IMR-90 (cell line): ENCODE measurements at regions of chr5 and their contacts with region 1.

Region 1: DNA sequence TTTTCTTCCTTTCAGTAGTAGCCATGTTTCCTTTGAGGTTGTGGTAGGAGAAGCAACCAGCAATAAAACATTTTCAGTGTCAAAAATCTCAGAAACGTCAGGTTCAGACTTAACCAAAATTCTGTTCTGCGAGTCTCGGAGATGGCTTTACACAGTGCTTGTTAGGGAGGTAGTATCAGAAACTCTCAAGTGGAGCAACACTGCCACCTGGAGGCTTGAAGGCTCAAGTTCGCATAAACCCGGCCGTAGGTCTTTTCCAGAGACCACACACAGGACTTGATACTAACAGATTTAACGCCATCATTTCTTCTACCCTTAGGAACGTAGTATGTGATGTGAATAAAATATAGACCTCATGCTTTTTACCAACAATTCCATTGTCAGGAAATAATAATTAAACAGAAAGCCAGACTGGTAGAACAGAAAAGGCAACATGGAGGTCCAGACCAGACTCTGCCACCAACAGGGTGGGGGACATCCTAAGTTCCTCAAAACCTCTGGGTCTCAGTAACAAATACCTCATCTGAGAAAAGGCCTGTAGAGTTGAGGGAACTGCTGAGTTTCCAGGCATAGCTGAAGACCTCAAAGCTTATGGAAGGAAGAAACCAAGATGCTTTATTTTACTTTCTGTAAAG is 8.5 kb downstream of the PTGER4 start:
- DNase-seq: peak; percentile 89
- ATAC-seq: peak; percentile 86
- H3K4me3 ChIP-seq: no peak overlapping the region
- H3K27ac ChIP-seq: peak overlapping the region; percentile 26; the same call in 1 of the 2 replicates
- H3K4me1 ChIP-seq: peaks cover 5% of the 10 kb centered on the region
- H3K27me3 ChIP-seq: no peaks in the 10 kb centered on the region
- CTCF ChIP-seq: peak; percentile 91
- POLR2A ChIP-seq: no peak; the same call in 1 of the 2 replicates
- RAD21 ChIP-seq: peak; percentile 98

Region 2: DNA sequence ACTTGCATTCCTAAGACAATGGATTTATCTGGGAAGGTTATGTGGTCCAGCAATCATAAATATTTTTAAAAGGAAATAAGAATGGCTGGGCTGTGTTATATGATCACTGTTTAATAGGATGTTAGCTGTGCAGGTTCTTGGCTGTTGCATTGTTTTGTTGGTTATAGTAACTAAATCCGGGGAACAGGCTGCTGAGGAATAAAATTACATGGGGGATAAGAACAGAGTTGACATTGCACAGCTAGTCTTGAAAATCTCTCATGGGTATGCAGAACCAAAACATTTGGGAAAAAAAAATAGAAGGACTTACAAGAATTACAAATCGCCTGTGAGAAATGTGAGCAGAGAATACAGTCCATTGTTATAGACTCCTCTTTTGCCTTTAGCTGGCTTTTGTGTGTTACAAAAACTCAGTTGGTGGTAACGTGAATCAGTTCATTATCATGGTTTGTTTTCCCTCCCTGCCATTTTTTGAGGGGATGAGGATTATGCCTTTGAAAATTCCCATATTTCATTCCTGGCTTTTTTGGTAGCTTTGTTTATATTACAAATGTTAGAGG is 888.1 kb before region 1 on chr5:
- CTCF ChIA-PET with region 1: no interaction called
- POLR2A ChIA-PET with region 1: no interaction called
- dilution Hi-C with region 1: no loop called
- in situ Hi-C with region 1: no loop called
- intact Hi-C with region 1: loop called (anchors 10 kb)
- DNase-seq: no peak
- ATAC-seq: no peak
- H3K4me3 ChIP-seq: no peak overlapping the region
- H3K27ac ChIP-seq: no peak overlapping the region
- H3K4me1 ChIP-seq: peaks cover 2% of the 10 kb centered on the region; the same call in 1 of the 2 replicates
- H3K27me3 ChIP-seq: no peaks in the 10 kb centered on the region
- CTCF ChIP-seq: no peak
- POLR2A ChIP-seq: no peak
- RAD21 ChIP-seq: no peak

Region 3: DNA sequence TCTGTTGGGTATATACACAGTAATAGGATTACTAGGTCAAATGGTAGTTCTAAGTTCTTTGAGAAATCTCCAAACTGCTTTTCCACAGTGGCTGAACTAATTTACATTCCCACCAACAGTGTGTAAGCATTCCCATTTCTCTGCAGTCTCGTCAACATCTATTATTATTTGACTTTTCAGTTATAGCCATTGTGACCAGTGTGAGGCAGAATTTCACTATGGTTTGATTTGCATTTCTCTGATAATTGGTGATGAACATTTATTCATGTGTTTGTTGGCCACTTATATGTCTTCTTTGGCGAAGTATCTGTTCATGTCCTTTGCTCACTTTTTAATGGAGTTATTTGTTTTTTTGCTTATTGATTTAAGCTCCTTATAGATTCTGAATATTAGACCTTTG is 667.2 kb before region 1 on chr5:
- CTCF ChIA-PET with region 1: no interaction called
- POLR2A ChIA-PET with region 1: no interaction called
- dilution Hi-C with region 1: no loop called
- in situ Hi-C with region 1: no loop called
- intact Hi-C with region 1: loop called (anchors 5 kb)
- DNase-seq: peak; percentile 2
- ATAC-seq: no peak
- H3K4me3 ChIP-seq: no peak overlapping the region
- H3K27ac ChIP-seq: no peak overlapping the region
- H3K4me1 ChIP-seq: no peaks in the 10 kb centered on the region
- H3K27me3 ChIP-seq: peaks cover 3% of the 10 kb centered on the region; the same call in 1 of the 2 replicates
- CTCF ChIP-seq: 0 out of 2 replicates have a peak, but pooled peaks have one; percentile 23
- POLR2A ChIP-seq: no peak
- RAD21 ChIP-seq: peak; percentile 37

Region 4: GRCh38 chr5:40367255-40367654 is 321.0 kb before region 1 on chr5:
- CTCF ChIA-PET with region 1: no interaction called
- POLR2A ChIA-PET with region 1: no interaction called
- dilution Hi-C with region 1: no loop called
- in situ Hi-C with region 1: no loop called
- intact Hi-C with region 1: loop called (anchors 2 kb)
- DNase-seq: peak; percentile 13
- ATAC-seq: no peak
- H3K4me3 ChIP-seq: no peak overlapping the region
- H3K27ac ChIP-seq: no peak overlapping the region
- H3K4me1 ChIP-seq: no peaks in the 10 kb centered on the region
- H3K27me3 ChIP-seq: no peaks in the 10 kb centered on the region
- CTCF ChIP-seq: peak; percentile 27
- POLR2A ChIP-seq: no peak
- RAD21 ChIP-seq: peak; percentile 43

Region 5: DNA sequence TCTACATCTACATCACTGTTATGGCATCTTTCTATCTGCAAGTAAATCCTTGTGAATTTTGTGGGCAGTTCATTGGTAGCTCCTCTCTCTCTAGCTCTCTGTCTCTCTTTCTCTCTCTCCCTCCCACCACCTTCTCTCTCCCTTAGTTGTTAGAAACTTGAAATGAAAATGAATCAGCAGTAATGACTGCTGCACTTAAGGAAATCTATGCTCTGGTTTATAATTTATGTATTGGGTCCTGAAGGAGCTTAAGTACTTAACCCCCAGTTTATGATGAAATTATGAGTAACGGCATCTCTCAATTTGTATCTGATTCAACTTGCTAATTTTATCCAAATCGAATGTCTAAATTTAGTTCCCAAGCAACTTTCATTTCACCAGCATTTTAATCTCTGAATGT is 60.5 kb before region 1 on chr5:
- CTCF ChIA-PET with region 1: no interaction called
- POLR2A ChIA-PET with region 1: no interaction called
- dilution Hi-C with region 1: no loop called
- in situ Hi-C with region 1: no loop called
- intact Hi-C with region 1: no loop called
- DNase-seq: peak; percentile 35
- ATAC-seq: peak; percentile 37
- H3K4me3 ChIP-seq: no peak overlapping the region
- H3K27ac ChIP-seq: no peak overlapping the region
- H3K4me1 ChIP-seq: peaks cover 4% of the 10 kb centered on the region; the same call in 1 of the 2 replicates
- H3K27me3 ChIP-seq: no peaks in the 10 kb centered on the region
- CTCF ChIP-seq: no peak
- POLR2A ChIP-seq: no peak
- RAD21 ChIP-seq: no peak

Region 6: DNA sequence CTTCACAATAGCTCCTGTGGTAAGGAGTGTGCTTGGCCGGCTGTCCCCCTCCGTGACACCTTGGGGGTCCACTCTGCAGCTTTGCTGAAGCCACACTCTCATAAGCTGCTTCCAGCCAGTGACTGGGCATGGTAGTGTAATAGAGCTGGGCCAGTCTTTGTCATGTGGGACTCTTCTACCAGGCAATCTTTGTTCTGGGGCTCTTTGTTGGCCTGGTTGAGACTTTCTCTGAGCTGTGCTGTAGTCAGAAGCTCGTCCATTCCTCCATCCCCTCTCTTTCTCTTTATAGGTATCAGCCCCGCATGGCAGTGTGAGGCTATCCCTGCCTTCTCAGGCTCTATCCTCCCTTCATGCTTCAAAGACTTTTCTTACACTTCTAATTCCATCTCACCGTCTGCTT is 178.6 kb after region 1 on chr5:
- CTCF ChIA-PET with region 1: no interaction called
- POLR2A ChIA-PET with region 1: no interaction called
- dilution Hi-C with region 1: no loop called
- in situ Hi-C with region 1: no loop called
- intact Hi-C with region 1: no loop called
- DNase-seq: no peak
- ATAC-seq: no peak
- H3K4me3 ChIP-seq: no peak overlapping the region
- H3K27ac ChIP-seq: no peak overlapping the region
- H3K4me1 ChIP-seq: no peaks in the 10 kb centered on the region
- H3K27me3 ChIP-seq: no peaks in the 10 kb centered on the region
- CTCF ChIP-seq: no peak
- POLR2A ChIP-seq: no peak
- RAD21 ChIP-seq: no peak

Region 7: GRCh38 chr5:40879163-40879942 is 191.1 kb after region 1 on chr5:
- CTCF ChIA-PET with region 1: interaction called, 3 read pairs
- POLR2A ChIA-PET with region 1: no interaction called
- dilution Hi-C with region 1: no loop called
- in situ Hi-C with region 1: no loop called
- intact Hi-C with region 1: loop called (anchors 2 kb)
- DNase-seq: peak; percentile 45
- ATAC-seq: peak; percentile 79
- H3K4me3 ChIP-seq: no peak overlapping the region
- H3K27ac ChIP-seq: no peak overlapping the region
- H3K4me1 ChIP-seq: no peaks in the 10 kb centered on the region
- H3K27me3 ChIP-seq: no peaks in the 10 kb centered on the region; the same call in 1 of the 2 replicates
- CTCF ChIP-seq: peak; percentile 60
- POLR2A ChIP-seq: no peak
- RAD21 ChIP-seq: peak; percentile 61

Region 8: GRCh38 chr5:41252036-41252435 is 563.8 kb after region 1 on chr5:
- CTCF ChIA-PET with region 1: no interaction called
- POLR2A ChIA-PET with region 1: no interaction called
- dilution Hi-C with region 1: no loop called
- in situ Hi-C with region 1: no loop called
- intact Hi-C with region 1: no loop called
- DNase-seq: peak; percentile 66
- ATAC-seq: peak; percentile 90
- H3K4me3 ChIP-seq: no peak overlapping the region
- H3K27ac ChIP-seq: peak overlapping the region; percentile 87; the same call in 1 of the 2 replicates
- H3K4me1 ChIP-seq: peaks cover 10% of the 10 kb centered on the region; the same call in 1 of the 2 replicates
- H3K27me3 ChIP-seq: no peaks in the 10 kb centered on the region
- CTCF ChIP-seq: no peak
- POLR2A ChIP-seq: no peak
- RAD21 ChIP-seq: no peak